ENCODE measurements at regions of chr13 and their contacts with region 1.

Region 1: DNA sequence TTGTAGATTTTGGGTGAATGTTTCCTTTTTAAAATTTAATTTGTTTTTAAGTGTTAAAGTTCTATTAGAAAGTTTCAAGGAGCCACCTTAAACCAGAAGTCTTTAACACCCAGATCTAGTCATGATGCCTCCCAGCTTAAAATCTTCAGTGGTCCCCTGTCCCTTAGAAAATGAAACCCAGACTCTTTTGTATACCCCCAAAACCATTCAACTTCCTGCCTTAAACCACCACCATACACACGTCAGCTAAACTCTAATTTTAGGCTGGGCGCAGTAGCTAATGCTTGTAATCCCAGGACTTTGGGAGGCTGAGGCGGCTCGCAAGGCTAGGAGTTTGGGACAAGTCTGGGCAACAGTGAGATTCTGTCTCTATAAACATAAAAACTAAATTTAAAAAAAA is 37.9 kb downstream of the N4BP2L1 start:
- DNase-seq: no peak
- ATAC-seq: no peak
- H3K4me3 Mint-ChIP-seq: no peak overlapping the region
- H3K27ac Mint-ChIP-seq: peak overlapping the region; percentile 73; the same call in 1 of the 2 replicates
- H3K4me1 Mint-ChIP-seq: peaks cover 14% of the 10 kb centered on the region
- H3K27me3 Mint-ChIP-seq: no peaks in the 10 kb centered on the region
- CTCF ChIP-seq: no peak

Region 2: DNA sequence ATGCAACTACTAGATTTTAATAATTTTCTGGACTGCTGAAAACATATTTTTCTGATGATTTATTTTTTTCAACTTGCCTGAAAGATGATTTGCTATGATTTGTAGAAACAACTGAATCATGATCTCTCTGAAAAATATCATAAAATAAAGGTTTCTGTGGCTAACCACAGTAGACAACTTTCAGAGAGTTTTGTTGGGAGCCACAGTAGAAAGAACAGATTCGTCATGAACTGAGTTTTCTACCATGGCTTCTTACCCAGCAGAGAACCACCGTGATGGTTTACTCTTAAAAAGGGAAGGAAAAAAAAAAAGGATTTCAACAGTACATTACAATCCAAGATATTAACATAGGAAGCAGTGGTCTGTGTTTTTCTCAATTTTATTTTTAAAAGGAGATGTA is 92.8 kb before region 1 on chr13:
- CTCF ChIA-PET with region 1: no interaction called
- POLR2A ChIA-PET with region 1: no interaction called
- DNase-seq: no peak
- ATAC-seq: no peak
- H3K4me3 Mint-ChIP-seq: no peak overlapping the region
- H3K27ac Mint-ChIP-seq: no peak overlapping the region
- H3K4me1 Mint-ChIP-seq: peaks cover 5% of the 10 kb centered on the region
- H3K27me3 Mint-ChIP-seq: no peaks in the 10 kb centered on the region
- CTCF ChIP-seq: no peak

Region 3: GRCh38 chr13:32330441-32330840 is 59.6 kb before region 1 on chr13:
- CTCF ChIA-PET with region 1: no interaction called
- POLR2A ChIA-PET with region 1: no interaction called
- DNase-seq: no peak
- ATAC-seq: no peak
- H3K4me3 Mint-ChIP-seq: no peak overlapping the region
- H3K27ac Mint-ChIP-seq: no peak overlapping the region
- H3K4me1 Mint-ChIP-seq: no peaks in the 10 kb centered on the region
- H3K27me3 Mint-ChIP-seq: no peaks in the 10 kb centered on the region
- CTCF ChIP-seq: no peak

Region 4: DNA sequence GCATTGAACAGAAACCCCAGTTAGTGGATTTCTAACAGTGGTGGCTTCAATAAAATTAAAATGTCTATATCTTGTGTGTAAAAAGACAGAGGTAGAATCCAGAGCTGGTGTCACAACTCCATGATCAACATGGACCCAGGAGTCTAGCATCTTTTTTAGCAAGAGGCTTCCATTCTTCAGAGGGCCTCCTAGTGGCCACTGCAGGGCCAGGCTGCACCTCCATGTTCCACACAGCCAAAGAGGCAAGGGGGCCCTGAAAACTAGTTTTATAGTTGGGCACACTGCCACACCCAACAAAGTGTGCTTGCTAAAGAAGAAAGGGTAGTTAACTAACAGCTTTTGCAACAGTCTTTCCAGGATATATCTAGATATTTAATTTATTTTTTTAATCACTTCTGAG is 25.0 kb after region 1 on chr13:
- CTCF ChIA-PET with region 1: interaction called, 11 read pairs
- POLR2A ChIA-PET with region 1: no interaction called
- DNase-seq: peak; percentile 55
- ATAC-seq: peak; percentile 89
- H3K4me3 Mint-ChIP-seq: no peak overlapping the region
- H3K27ac Mint-ChIP-seq: no peak overlapping the region
- H3K4me1 Mint-ChIP-seq: peaks cover 11% of the 10 kb centered on the region
- H3K27me3 Mint-ChIP-seq: peaks cover 3% of the 10 kb centered on the region
- CTCF ChIP-seq: peak; percentile 58; the same call in 1 of the 2 replicates

Measured in WTC11 (cell line).